ENCODE measurements at regions of chr13 and their contacts with region 1.

Region 1: GRCh38 chr13:49996951-49997895 is at the start of gene TRIM13:
- DNase-seq: peak; percentile 91 to 95 (median 94)
- H3K4me3 ChIP-seq: peak within 1 kb of the TSS; percentile 77 to 97 (median 94)
- H3K27ac ChIP-seq: peak within 1 kb of the TSS; percentile 96 to 97
- H3K4me1 ChIP-seq: peaks cover 13 to 47% (median 37%) of the 10 kb centered on the region in 4 experiments
- H3K27me3 ChIP-seq: no peaks in the 10 kb centered on the region

Region 2: GRCh38 chr13:49927755-49928154 is 69.5 kb before region 1 on chr13:
- CTCF ChIA-PET with region 1: no interaction called
- POLR2A ChIA-PET with region 1: no interaction called
- DNase-seq: peak; percentile 11 to 74 (median 68)
- H3K4me3 ChIP-seq: no peak overlapping the region
- H3K27ac ChIP-seq: no peak overlapping the region
- H3K4me1 ChIP-seq: peaks cover 3 to 16% (median 12%) of the 10 kb centered on the region in 4 experiments
- H3K27me3 ChIP-seq: no peaks in the 10 kb centered on the region

Region 3: GRCh38 chr13:49976314-49977258 is 20.6 kb before region 1 on chr13:
- CTCF ChIA-PET with region 1: interaction called, 36 read pairs
- POLR2A ChIA-PET with region 1: interaction called, 7 read pairs
- DNase-seq: peak; percentile 81 to 89 (median 84)
- H3K4me3 ChIP-seq: no peak overlapping the region
- H3K27ac ChIP-seq: no peak overlapping the region
- H3K4me1 ChIP-seq: peaks cover 0 to 28% (median 10%) of the 10 kb centered on the region in 4 experiments
- H3K27me3 ChIP-seq: no peaks in the 10 kb centered on the region

Region 4: GRCh38 chr13:50015258-50015657 is 18.0 kb after region 1 on chr13 and contains the start of gene KCNRG:
- CTCF ChIA-PET with region 1: interaction called, 21 read pairs
- POLR2A ChIA-PET with region 1: interaction called, 8 read pairs
- DNase-seq: peak in 2 of 3 donors; percentile 27 to 34
- H3K4me3 ChIP-seq: no peak within 1 kb of the TSS
- H3K27ac ChIP-seq: no peak within 1 kb of the TSS
- H3K4me1 ChIP-seq: peaks cover 0 to 5% (median 0%) of the 10 kb centered on the region in 4 experiments
- H3K27me3 ChIP-seq: no peaks in the 10 kb centered on the region

Measured in common myeloid progenitor, CD34-positive (primary cell).